A549 (cell line): ENCODE measurements at regions of chr19 and their contacts with region 1.

Region 1: DNA sequence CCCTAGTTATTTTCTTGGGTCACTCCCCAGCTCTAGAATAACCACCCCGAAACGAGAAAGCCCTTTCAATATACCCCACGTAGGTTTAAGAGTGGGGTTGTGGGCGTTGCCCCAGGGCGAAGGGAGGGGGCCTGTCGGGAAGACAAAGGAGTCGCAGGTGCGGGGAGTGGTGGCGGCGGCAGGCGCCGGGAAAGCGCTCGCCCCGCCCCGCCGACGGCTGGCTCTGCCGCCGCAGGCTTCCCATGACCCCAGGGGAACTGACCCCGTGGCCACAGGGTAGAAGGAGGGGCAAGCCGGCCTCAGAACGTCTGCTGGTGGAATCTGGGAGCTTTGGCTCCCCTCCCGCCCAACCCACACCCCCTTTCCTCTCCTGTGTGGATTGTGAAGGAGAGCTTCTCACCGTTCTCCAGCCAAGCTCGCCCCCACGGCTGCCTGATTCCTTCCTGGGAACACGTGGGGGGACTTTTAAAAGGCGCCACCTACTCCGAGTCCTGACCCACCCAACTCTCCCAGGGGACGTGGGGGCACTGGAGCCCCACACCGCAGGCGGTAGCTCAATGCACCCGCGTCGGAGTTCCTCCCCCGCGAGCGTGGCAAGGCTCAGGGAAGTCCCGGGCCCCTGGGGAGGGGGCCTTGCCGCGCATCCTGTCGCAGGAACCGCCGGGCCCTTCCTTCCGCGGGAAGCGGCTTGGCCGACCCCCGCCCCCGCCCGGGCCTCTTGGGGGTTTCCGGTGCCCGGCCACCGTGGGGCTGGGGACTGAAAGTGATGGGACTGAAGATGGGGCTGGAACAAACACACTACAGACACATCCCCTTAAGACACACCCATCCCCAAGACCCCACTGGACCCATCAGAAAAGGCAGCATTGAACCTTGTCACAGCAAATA is 5.5 kb downstream of the IER2 start:
- DNase-seq: peak in 1 of 2 experiments; percentile 81
- ATAC-seq: peak; percentile 16 to 24
- H3K4me3 ChIP-seq: peak overlapping the region; percentile 98
- H3K27ac ChIP-seq: peak overlapping the region; percentile 94 to 99
- H3K4me1 ChIP-seq: peaks cover 16% of the 10 kb centered on the region
- CTCF ChIP-seq: no peak
- EP300 ChIP-seq: peak in 1 of 2 experiments; percentile 19; a peak in 1 of 5 replicates
- POLR2A ChIP-seq: no peak; the same call in 1 of the 2 replicates
- RAD21 ChIP-seq: no peak; a peak in 2 of 5 replicates

Region 2: GRCh38 chr19:13172068-13172896 is 16.6 kb after region 1 on chr19:
- CTCF ChIA-PET with region 1: interaction called, 13 read pairs
- POLR2A ChIA-PET with region 1: interaction called, 40 read pairs
- DNase-seq: peak; percentile 60 to 91
- ATAC-seq: peak; percentile 19 to 43; a peak in 4 of 6 replicates
- H3K4me3 ChIP-seq: no peak overlapping the region
- H3K27ac ChIP-seq: peak overlapping the region; percentile 100
- H3K4me1 ChIP-seq: peaks cover 54% of the 10 kb centered on the region
- CTCF ChIP-seq: no peak
- EP300 ChIP-seq: no peak
- POLR2A ChIP-seq: no peak
- RAD21 ChIP-seq: 0 out of 5 replicates have a peak, but pooled peaks of 1 of the 2 experiments have one; percentile 7